Heart left ventricle (tissue), 16 donors: ENCODE measurements at regions of chr13 and their contacts with region 1.

Region 1: DNA sequence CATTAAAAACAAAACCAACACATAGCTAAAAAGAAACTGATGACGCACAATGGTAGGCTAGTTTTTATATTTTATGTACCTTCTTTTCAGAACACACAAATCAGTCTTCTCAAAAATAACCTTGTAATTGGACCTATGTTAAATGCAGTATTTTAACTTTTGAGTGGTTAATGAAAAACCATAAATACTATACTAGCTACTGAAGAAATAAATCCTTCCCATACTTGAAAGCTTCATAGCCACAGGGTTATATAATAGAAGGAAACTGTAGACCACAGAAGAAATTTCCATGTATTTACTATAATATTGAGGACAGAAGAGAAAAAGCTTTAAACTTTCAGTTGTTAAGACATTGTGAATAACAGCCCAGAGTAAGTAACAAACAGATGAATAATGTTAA is 1094.3 kb upstream of the SLC10A2 start:
- DNase-seq: no peak
- ATAC-seq: no peak
- H3K4me3 ChIP-seq: no peak overlapping the region
- H3K27ac ChIP-seq: no peak overlapping the region
- H3K4me1 ChIP-seq: no peaks in the 10 kb centered on the region
- H3K27me3 ChIP-seq: no peaks in the 10 kb centered on the region
- CTCF ChIP-seq: no peak
- POLR2A ChIP-seq: no peak

Region 2: DNA sequence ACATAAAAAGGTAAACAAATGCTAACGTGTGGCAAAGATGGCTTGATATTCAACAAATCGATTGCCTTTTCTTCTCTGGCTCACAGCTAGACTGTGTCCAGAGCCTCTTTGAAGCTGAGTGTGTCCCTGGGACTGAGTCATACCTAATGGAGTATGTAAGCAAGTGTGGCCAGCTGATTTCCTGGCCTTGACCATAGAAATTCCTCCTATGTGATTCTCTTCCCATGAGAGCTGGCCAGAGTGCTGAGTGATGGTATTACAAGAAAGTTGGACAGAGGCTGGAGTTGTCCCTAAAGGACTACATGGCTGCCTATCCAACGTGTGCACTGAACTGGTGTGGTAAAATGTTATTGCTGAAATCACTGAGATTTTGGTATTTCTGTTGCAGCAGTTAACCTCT is 774.2 kb before region 1 on chr13:
- intact Hi-C with region 1: loop called in 1 of 10 experiments (anchors 10 kb)
- DNase-seq: peak in 3 of 5 donors; percentile 8 to 29 (median 26)
- ATAC-seq: peak; percentile 80 to 95 (median 82)
- H3K4me3 ChIP-seq: no peak overlapping the region
- H3K27ac ChIP-seq: no peak overlapping the region
- H3K4me1 ChIP-seq: no peaks in the 10 kb centered on the region
- H3K27me3 ChIP-seq: no peaks in the 10 kb centered on the region
- CTCF ChIP-seq: no peak
- POLR2A ChIP-seq: no peak